Motor neuron (in vitro differentiated cells): ENCODE measurements at regions of chr1 and their contacts with region 1.

Region 1: DNA sequence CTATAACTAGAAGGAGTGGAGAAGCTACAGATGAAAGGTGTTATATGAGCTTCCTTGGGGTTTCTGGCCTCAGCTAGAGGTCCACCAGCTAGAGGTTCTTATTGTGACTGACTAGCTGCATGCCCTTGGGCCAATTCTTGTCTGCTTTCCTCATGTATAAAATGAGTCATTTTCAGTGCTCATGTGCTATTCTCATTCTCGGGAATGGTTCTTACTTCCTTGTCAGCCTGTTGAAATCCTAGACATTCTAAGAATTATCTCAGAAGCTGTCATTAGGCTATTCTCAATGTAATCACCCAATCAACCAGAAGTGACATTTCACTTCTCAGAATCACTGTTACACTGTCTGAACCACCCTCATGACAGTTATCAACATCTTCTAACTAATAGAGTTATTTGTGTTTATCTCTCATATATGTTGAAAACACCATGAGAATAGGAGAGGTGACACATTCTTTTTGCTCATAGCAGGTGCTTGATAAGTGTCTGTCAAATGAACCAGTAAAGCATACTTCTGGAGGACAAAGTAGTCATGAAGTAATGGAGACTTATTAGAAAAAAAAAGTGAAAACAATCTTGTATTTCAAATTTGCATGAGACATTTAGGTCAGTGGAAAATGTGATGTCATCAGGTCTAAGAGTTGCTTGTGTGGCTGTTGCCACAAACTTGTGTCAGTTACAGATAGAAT is 122.8 kb upstream of the IVNS1ABP start:
- ATAC-seq: peak in 4 of 8 experiments; percentile 14 to 94 (median 85)
- H3K4me3 ChIP-seq: no peak overlapping the region
- H3K27ac ChIP-seq: no peak overlapping the region
- H3K4me1 ChIP-seq: no peaks in the 10 kb centered on the region

Region 2: GRCh38 chr1:185670187-185670627 is 230.3 kb after region 1 on chr1:
- in situ Hi-C with region 1: loop called in 2 of 9 experiments (anchors 25 kb)
- ATAC-seq: peak; percentile 32 to 91 (median 56)
- H3K4me3 ChIP-seq: no peak overlapping the region
- H3K27ac ChIP-seq: no peak overlapping the region
- H3K4me1 ChIP-seq: no peaks in the 10 kb centered on the region